OCI-LY7 (cell line): ENCODE measurements at regions of chr4 and their contacts with region 1.

Region 1: DNA sequence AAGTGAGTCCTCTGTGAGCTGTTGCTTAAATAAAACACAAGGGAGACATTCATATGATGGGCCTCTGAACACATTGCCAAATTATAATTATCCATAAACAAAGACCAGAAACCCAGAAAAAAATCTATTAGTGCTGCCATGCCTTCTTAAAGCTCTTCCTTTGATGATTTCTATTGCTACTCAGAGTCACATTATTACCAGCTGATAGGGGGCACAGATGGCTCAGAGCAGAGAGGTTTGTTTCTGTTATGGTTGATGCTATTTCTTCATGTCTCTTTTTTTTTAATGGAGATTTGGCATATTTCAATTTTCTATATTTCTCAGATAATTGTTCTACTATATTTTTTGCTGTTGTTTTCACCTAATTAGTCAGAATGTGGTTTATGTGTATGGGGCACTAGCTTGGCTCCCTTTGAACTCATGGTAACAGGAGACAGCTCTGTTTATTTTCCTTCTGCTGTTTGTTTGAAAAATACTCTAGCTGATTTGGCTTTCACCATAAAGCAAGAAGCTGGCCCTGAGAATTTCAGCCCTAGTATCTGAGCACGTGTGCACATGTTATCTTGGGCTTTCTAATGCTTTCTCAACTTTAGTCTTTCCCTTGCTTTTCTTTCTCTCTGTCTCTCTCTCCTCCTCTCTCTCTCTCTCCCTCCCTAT is 568.8 kb downstream of the PPARGC1A start:
- DNase-seq: no peak
- H3K4me3 ChIP-seq: no peak overlapping the region
- H3K27ac ChIP-seq: no peak overlapping the region
- H3K4me1 ChIP-seq: peaks cover 6% of the 10 kb centered on the region
- CTCF ChIP-seq: no peak

Region 2: GRCh38 chr4:23305026-23305425 is 16.0 kb before region 1 on chr4:
- CTCF ChIA-PET with region 1: no interaction called
- POLR2A ChIA-PET with region 1: interaction called, 10 read pairs
- intact Hi-C with region 1: no loop called
- DNase-seq: no peak
- H3K4me3 ChIP-seq: no peak overlapping the region
- H3K27ac ChIP-seq: no peak overlapping the region
- H3K4me1 ChIP-seq: peaks cover 6% of the 10 kb centered on the region
- CTCF ChIP-seq: no peak